ENCODE measurements at regions of chr14 and their contacts with region 1.

Region 1: GRCh38 chr14:68682166-68683103 is 110.4 kb downstream of the ZFP36L1 start:
- DNase-seq: no peak
- H3K4me3 ChIP-seq: peak overlapping the region in 1 of 8 donors; percentile 57
- H3K27ac ChIP-seq: peak overlapping the region; percentile 64 to 96 (median 91)
- H3K4me1 ChIP-seq: peaks cover 34 to 79% (median 59%) of the 10 kb centered on the region in 6 donors
- H3K27me3 ChIP-seq: no peaks in the 10 kb centered on the region
- CTCF ChIP-seq: peak in 1 of 11 experiments; percentile 6
- POLR2A ChIP-seq: no peak

Region 2: GRCh38 chr14:68749487-68750475 is 67.3 kb after region 1 on chr14:
- intact Hi-C with region 1: no loop called
- DNase-seq: no peak
- H3K4me3 ChIP-seq: no peak overlapping the region
- H3K27ac ChIP-seq: no peak overlapping the region
- H3K4me1 ChIP-seq: peaks cover 0 to 28% (median 3%) of the 10 kb centered on the region in 6 donors
- H3K27me3 ChIP-seq: peaks cover 0 to 3% (median 0%) of the 10 kb centered on the region in 7 donors
- CTCF ChIP-seq: no peak
- POLR2A ChIP-seq: no peak

Region 3: GRCh38 chr14:68789821-68790643 is 107.6 kb after region 1 on chr14:
- intact Hi-C with region 1: loop called (anchors 2 kb)
- DNase-seq: peak; percentile 87
- H3K4me3 ChIP-seq: peak overlapping the region; percentile 80 to 99 (median 94)
- H3K27ac ChIP-seq: peak overlapping the region; percentile 92 to 100 (median 100)
- H3K4me1 ChIP-seq: peaks cover 24 to 73% (median 49%) of the 10 kb centered on the region in 6 donors
- H3K27me3 ChIP-seq: no peaks in the 10 kb centered on the region
- CTCF ChIP-seq: peak in 1 of 11 experiments; percentile 11
- POLR2A ChIP-seq: no peak

Region 4: GRCh38 chr14:68979021-68979782 is 296.8 kb after region 1 on chr14 and contains the start of gene ACTN1:
- intact Hi-C with region 1: no loop called
- DNase-seq: peak; percentile 94
- H3K4me3 ChIP-seq: peak within 1 kb of the TSS; percentile 69 to 84 (median 75)
- H3K27ac ChIP-seq: peak within 1 kb of the TSS; percentile 70 to 97 (median 93)
- H3K4me1 ChIP-seq: peaks cover 14 to 72% (median 53%) of the 10 kb centered on the region in 6 donors
- H3K27me3 ChIP-seq: peaks cover 0 to 54% (median 27%) of the 10 kb centered on the region in 7 donors
- CTCF ChIP-seq: no peak
- POLR2A ChIP-seq: peak in 1 of 3 donors; percentile 63
- total RNA-seq, gene ACTN1: 87.3 to 315 (median 121) TPM

Measured in spleen (tissue), 13 donors.